ENCODE measurements at regions of chr1 and their contacts with region 1.

Region 1: DNA sequence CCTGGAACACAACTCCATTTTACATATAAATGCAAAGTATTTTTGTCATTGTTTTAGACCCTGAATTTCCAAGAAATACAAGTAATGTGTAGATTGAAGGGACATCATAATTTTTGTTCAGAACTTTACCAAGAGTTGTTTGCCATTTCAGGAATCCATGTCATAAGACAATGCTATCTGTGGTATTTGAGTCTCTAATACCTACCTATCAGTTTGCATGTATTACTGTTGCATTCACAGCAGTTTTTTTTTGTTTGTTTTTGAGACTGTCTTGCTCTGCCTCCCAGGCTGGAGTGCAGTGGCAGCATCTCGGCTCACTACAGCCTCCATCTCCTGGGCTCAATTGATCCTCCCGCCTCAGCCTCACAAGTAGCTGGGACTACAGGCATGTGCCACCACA is 17.1 kb downstream of the MPZ start:
- DNase-seq: no peak
- H3K4me3 Mint-ChIP-seq: no peak overlapping the region
- H3K27ac Mint-ChIP-seq: no peak overlapping the region
- H3K4me1 Mint-ChIP-seq: no peaks in the 10 kb centered on the region
- H3K27me3 Mint-ChIP-seq: no peaks in the 10 kb centered on the region

Region 2: DNA sequence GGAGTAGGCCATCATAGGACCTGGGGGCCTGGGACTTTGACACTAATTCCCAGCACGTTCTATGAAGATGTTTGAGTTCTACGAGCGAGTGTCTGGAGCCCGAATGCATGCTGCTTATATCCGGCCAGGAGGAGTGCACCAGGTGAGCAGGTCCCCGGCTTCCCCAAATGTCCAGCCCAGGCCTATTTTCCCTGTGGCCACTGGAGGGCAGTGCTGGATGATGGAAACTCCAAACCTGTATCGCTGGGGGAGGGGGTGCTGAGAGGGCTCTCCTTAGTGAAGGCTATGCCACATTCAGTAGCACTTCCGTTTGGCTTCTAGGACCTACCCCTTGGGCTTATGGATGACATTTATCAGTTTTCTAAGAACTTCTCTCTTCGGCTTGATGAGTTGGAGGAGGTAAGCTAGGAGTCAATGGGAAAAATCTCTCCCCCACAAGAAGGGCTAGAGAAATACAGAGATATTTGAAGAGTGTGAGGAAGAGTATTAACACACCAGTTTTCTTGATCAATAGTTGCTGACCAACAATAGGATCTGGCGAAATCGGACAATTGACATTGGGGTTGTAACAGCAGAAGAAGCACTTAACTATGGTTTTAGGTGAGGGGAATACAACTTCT is 82.7 kb before region 1 on chr1:
- intact Hi-C with region 1: loop called (anchors 5 kb)
- DNase-seq: peak; percentile 92
- H3K4me3 Mint-ChIP-seq: no peak overlapping the region
- H3K27ac Mint-ChIP-seq: no peak overlapping the region
- H3K4me1 Mint-ChIP-seq: peaks cover 34% of the 10 kb centered on the region
- H3K27me3 Mint-ChIP-seq: no peaks in the 10 kb centered on the region

Region 3: DNA sequence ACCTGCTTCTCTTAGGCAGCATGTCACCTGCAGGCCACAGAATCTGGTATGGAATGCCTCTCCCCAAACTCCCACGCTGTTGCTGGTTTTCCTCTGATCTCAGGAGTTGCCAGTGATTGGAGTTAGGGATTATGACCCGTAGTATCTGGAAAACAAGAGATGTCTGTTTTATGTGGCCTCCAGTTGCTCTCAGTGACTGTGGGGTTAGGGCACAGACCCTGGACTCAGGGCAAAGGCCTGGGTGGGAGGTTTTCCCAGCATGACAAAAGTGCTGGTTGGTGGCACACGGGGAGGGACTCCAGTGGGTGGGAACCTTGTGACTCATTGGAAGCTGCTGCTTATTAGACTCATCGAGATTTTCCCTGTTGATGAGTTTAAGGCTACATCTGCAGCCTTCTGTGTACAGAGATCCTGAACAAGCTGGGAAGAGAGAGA is 54.6 kb before region 1 on chr1 and contains the start of gene NR1I3:
- intact Hi-C with region 1: no loop called
- DNase-seq: no peak
- H3K4me3 Mint-ChIP-seq: no peak within 1 kb of the TSS
- H3K27ac Mint-ChIP-seq: no peak within 1 kb of the TSS
- H3K4me1 Mint-ChIP-seq: no peaks in the 10 kb centered on the region
- H3K27me3 Mint-ChIP-seq: peaks cover 20% of the 10 kb centered on the region
- total RNA-seq, gene NR1I3: not detected in 2 replicates

Region 4: DNA sequence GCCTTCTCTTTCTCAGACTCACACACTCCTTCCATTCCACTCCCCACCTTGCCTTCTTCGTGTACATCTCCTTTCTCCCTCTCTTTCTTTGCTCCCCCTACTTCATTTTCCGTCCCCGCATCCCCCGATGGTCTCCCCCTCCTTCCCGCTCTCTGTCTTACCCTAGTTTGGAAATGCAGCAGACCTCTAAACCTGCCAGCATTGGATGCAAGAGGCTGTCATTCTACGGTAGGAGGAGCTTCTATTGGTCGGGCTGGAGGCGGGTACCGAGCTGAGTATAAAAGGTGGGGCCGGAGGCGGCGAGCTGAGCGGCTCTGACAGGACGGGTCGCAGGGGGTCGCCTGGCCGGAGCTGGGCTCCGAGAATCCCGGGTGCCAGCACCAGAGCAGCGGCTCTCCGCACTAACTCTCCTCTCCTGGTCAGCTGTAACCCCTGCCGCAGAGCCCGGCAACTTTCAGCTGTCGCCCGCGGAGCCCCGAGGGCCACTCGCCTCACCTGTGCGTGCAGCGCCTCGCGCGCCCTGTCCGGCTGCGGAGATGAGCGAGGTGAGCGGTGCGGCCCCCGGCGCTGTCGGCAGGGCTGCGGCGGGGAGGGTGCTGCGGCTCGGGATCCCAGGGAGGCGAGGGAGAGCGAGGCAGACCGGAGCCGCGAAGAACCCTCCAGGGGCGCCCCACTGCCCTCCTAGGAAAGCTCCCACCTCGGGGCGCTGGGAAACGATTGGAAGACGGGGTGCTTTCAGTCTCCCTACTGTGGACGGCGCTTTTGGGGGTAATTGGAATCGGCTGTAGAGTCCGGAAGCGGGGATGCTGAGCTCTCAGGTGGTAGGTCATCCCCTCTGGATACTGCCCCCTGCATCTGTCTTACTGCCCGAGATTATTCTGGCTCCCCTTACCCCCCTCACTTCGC is 33.9 kb before region 1 on chr1 and contains the start of gene PCP4L1:
- intact Hi-C with region 1: no loop called
- DNase-seq: peak; percentile 81
- H3K4me3 Mint-ChIP-seq: peak within 1 kb of the TSS; percentile 74
- H3K27ac Mint-ChIP-seq: no peak within 1 kb of the TSS
- H3K4me1 Mint-ChIP-seq: peaks cover 9% of the 10 kb centered on the region
- H3K27me3 Mint-ChIP-seq: peaks cover 61% of the 10 kb centered on the region
- total RNA-seq, gene PCP4L1: 0.14 TPM in 1 of 2 replicates, not detected in the other

Region 5: GRCh38 chr1:161330346-161330745 is 37.7 kb after region 1 on chr1:
- intact Hi-C with region 1: no loop called
- DNase-seq: no peak
- H3K4me3 Mint-ChIP-seq: no peak overlapping the region
- H3K27ac Mint-ChIP-seq: no peak overlapping the region
- H3K4me1 Mint-ChIP-seq: peaks cover 6% of the 10 kb centered on the region
- H3K27me3 Mint-ChIP-seq: no peaks in the 10 kb centered on the region

Measured in activated CD4-positive, alpha-beta T cell treated with anti-CD3 and anti-CD28 coated beads, Interleukin-2, amount 10 ng/mL, durations not matched to agents 24 days and 14 days (primary cell).